Endothelial cell of umbilical vein (primary cell): ENCODE measurements at regions of chr12 and their contacts with region 1.

Region 1: DNA sequence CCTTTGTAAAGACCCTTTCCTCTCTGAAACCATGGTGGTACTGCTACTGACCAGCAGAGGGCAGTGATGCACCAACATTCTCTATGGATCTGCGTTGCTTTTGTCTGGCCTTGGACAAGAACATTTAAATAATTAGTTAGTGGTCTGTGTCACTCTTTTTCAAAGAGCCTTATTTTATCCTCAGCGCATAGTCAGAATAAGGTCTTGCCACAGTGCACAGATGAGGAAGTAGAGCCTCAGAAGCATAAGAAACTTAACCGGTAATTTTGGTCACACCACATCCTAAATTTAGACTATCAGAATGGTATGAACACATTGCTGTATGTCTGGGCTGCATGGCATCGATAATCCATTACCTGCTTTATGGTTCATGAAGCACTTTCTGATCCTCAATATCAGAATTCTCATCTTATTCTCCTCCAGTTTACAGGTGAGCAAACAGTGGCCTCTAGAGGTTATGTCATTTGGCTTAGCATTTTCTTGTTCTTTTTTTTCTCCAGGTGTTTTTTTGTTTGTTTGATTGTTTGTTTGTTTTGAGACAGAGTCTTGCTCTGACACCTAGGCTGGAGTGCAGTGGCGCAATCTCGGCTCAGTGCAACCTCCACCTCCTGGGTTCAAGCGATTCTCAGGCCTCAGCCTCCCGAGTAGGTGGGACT is 23.7 kb upstream of the IFT81 start:
- DNase-seq: peak; percentile 85
- H3K4me3 ChIP-seq: no peak overlapping the region
- H3K27ac ChIP-seq: no peak overlapping the region
- H3K4me1 ChIP-seq: no peaks in the 10 kb centered on the region
- H3K27me3 ChIP-seq: no peaks in the 10 kb centered on the region
- CTCF ChIP-seq: peak; percentile 81 to 89
- POLR2A ChIP-seq: no peak

Region 2: GRCh38 chr12:110056147-110056484 is 44.3 kb before region 1 on chr12:
- CTCF ChIA-PET with region 1: no interaction called
- POLR2A ChIA-PET with region 1: no interaction called
- dilution Hi-C with region 1: no loop called
- intact Hi-C with region 1: no loop called
- DNase-seq: no peak
- H3K4me3 ChIP-seq: no peak overlapping the region
- H3K27ac ChIP-seq: no peak overlapping the region
- H3K4me1 ChIP-seq: peaks cover 15% of the 10 kb centered on the region
- H3K27me3 ChIP-seq: no peaks in the 10 kb centered on the region
- CTCF ChIP-seq: no peak
- POLR2A ChIP-seq: no peak

Region 3: DNA sequence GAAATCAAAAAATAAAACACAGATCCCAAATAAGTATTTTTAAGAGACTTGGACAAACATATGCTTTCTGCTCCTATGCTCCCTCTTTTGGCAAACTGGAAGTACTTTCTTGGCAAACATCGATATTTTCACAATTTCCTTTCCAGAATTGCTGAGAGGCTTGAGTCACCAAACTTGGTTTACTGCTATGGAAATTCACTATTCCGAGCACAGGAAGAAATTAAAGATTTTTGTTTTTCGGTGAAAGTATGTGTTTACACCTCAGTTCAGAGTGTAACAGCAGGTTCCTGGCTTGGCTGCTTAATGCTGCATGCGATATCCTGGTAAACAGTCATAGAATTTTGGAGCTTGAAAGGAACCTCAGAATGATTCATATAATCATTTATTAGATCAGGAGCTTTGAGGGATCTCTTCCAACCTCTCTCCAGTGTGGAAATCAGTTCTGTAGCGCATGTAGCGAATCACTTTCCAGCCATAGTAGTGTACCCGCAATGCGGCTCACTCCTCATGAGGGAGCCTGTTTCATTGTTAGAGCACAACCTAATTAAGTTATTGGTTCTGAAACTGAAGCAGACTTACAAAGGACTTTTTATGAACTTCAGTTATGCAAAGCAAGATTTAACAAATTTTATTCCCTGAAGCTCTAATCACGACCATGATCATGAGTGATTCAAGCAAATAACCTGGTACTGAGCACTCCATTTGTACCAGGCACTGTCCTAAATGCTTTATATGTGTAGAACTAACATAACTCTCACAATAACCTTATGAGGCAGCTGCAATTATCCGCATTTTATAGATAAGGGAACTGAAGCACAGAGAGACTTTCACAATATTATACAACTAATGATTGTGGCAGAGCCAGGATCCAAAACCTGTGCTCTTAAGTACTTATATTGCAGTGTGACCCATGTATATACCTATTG is 124.2 kb after region 1 on chr12:
- CTCF ChIA-PET with region 1: interaction called, 55 read pairs
- POLR2A ChIA-PET with region 1: no interaction called
- dilution Hi-C with region 1: no loop called
- intact Hi-C with region 1: loop called (anchors 1 kb)
- DNase-seq: peak; percentile 85
- H3K4me3 ChIP-seq: peak overlapping the region in 1 of 3 experiments; percentile 46
- H3K27ac ChIP-seq: no peak overlapping the region
- H3K4me1 ChIP-seq: peaks cover 6% of the 10 kb centered on the region
- H3K27me3 ChIP-seq: no peaks in the 10 kb centered on the region
- CTCF ChIP-seq: peak; percentile 43 to 53
- POLR2A ChIP-seq: no peak

Region 4: DNA sequence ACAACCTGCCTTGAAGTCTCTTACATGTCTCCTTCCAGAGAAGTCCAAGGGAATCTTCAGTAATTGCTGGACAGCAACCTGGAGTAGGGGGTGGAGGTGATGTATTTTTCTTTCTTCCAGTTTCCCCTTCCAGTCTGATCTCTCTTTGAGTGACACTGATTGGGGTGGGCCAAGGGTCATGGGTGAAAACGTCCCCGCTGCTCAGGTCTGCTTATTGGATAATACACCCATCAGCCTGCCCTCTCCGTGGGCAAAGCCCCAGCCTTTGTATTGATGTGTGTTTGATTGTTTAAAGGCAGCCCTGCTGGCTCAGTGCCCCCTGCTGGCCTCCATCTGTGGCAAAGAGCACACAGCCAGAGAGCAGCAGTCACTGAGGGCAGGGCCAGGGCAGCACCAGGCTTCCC is 144.9 kb after region 1 on chr12:
- CTCF ChIA-PET with region 1: interaction called, 26 read pairs
- POLR2A ChIA-PET with region 1: no interaction called
- dilution Hi-C with region 1: no loop called
- intact Hi-C with region 1: loop called (anchors 1 kb)
- DNase-seq: peak; percentile 20
- H3K4me3 ChIP-seq: no peak overlapping the region
- H3K27ac ChIP-seq: no peak overlapping the region
- H3K4me1 ChIP-seq: no peaks in the 10 kb centered on the region
- H3K27me3 ChIP-seq: no peaks in the 10 kb centered on the region
- CTCF ChIP-seq: peak; percentile 59 to 75
- POLR2A ChIP-seq: no peak

Region 5: DNA sequence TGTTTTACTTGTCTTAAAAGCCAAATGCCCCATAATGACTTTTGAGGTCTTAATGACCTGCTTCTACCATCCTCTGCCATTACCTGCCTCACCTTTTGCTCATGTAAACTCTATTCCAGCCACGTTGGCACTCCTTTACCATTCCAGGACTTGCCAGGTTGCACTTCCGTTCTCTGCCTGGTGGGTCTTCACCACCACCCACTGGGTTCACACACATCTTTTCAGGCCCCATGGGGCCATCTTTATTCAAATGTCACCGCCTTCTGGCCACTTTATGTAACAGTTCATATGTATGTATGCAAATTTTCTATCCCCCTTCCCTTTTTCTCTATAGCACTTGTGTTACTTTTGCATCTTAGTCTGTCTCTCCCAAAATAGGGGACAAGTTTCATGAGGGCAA is 238.3 kb after region 1 on chr12:
- CTCF ChIA-PET with region 1: interaction called, 5 read pairs
- POLR2A ChIA-PET with region 1: no interaction called
- dilution Hi-C with region 1: no loop called
- intact Hi-C with region 1: loop called (anchors 5 kb)
- DNase-seq: peak; percentile 17
- H3K4me3 ChIP-seq: no peak overlapping the region
- H3K27ac ChIP-seq: no peak overlapping the region
- H3K4me1 ChIP-seq: no peaks in the 10 kb centered on the region
- H3K27me3 ChIP-seq: no peaks in the 10 kb centered on the region
- CTCF ChIP-seq: peak in 1 of 2 donors; percentile 11
- POLR2A ChIP-seq: no peak

Region 6: DNA sequence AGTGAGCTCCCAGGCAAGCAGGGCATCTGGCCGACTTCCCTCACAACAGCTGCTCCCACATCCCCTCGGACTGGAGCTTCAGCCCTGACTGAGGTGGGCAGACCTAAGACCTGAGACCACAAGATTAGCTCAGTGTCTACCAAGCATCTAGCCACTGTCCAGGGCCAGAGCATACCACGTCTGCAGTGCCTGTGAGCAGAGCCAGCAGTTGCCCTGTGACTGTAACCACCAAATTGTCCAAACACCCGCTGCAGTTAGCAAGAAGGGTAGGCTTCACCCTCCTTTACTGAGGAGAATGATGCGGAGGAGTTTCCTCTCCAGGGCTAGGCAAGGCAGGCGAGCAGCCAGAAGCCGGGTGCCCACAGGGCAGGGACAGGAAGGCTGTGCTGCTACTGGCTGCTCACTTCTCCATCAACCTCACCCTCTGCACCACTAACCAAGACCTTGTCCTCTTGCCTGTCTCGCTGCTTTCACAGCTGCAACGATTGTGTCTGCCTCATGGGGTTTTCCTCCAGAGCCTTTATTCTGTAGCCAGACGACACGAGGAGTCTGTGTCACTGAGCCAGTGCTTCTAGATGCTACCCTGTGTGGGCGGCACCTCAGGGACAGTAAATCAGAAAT is 249.2 kb after region 1 on chr12:
- CTCF ChIA-PET with region 1: no interaction called
- POLR2A ChIA-PET with region 1: no interaction called
- dilution Hi-C with region 1: no loop called
- intact Hi-C with region 1: loop called (anchors 5 kb)
- DNase-seq: no peak
- H3K4me3 ChIP-seq: no peak overlapping the region
- H3K27ac ChIP-seq: no peak overlapping the region
- H3K4me1 ChIP-seq: peaks cover 16% of the 10 kb centered on the region
- H3K27me3 ChIP-seq: no peaks in the 10 kb centered on the region
- CTCF ChIP-seq: no peak
- POLR2A ChIP-seq: no peak